Activated B cell treated with CpG ODN at 0.5 μM for 24 hours (primary cell): ENCODE measurements at regions of chr2 and their contacts with region 1.

Region 1: GRCh38 chr2:37083873-37084794 is at the starts of genes GPATCH11 and HEATR5B:
- DNase-seq: peak; percentile 83
- ATAC-seq: peak; percentile 83
- H3K4me3 Mint-ChIP-seq: no peak within 1 kb of the TSS
- H3K27ac Mint-ChIP-seq: no peak within 1 kb of the TSS
- H3K4me1 Mint-ChIP-seq: peaks cover 23% of the 10 kb centered on the region
- H3K27me3 Mint-ChIP-seq: no peaks in the 10 kb centered on the region
- CTCF ChIP-seq: no peak
- total RNA-seq, gene GPATCH11: 30.7 and 32.9 TPM in 2 replicates
- total RNA-seq, gene HEATR5B: 42.6 and 50.3 TPM in 2 replicates

Region 2: GRCh38 chr2:36663851-36664695 is 420.1 kb before region 1 on chr2:
- CTCF ChIA-PET with region 1: no interaction called
- POLR2A ChIA-PET with region 1: no interaction called
- intact Hi-C with region 1: no loop called
- DNase-seq: no peak
- ATAC-seq: no peak
- H3K4me3 Mint-ChIP-seq: no peak overlapping the region
- H3K27ac Mint-ChIP-seq: no peak overlapping the region
- H3K4me1 Mint-ChIP-seq: no peaks in the 10 kb centered on the region
- H3K27me3 Mint-ChIP-seq: peaks cover 3% of the 10 kb centered on the region
- CTCF ChIP-seq: no peak

Region 3: DNA sequence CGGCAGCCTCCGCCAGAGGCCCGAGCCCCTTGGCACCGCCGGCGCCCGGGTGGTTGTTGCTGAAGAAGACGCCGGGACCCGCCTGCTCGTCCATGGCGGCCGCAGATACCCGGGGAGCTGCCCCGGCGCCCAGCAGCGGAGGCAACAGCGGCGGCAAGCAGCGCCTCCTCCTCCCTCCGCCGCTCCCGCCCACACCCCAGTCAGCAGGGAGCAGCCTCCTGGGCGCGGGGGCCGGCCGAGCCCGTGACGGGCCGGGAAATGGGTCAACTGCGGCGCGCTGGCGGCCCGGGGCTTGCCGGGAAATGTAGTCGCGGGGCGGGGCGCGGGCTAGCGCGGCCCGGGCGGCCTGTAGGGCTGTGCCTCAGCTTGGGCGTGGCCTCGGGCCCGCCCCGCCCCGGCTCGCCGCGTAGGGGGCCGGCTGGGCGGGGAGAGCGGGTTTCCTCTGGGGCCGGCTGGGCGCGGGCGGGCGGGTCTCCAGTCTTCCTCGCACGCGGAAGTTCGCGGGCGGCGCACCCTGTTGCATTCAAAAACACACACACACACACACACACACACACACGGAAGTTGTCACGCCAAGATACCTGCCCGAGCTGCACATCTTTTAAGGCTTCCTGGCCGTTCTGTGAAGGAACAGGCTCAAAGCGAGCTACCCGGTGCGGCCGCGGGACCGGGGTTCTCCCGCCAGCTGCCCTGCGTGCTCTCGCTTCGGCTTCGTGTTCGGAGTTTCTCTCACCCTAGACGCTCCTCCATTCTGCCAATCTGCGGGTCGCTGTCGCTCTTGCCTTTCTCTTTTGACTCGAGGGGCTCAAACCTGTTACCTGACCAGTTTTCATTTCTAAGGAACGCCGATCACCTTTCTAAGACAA is 117.5 kb before region 1 on chr2 and contains the start of gene STRN:
- CTCF ChIA-PET with region 1: no interaction called
- POLR2A ChIA-PET with region 1: interaction called, 7 read pairs
- intact Hi-C with region 1: loop called (anchors 1 kb)
- DNase-seq: peak; percentile 100
- ATAC-seq: peak; percentile 91
- H3K4me3 Mint-ChIP-seq: peak within 1 kb of the TSS; percentile 97
- H3K27ac Mint-ChIP-seq: peak within 1 kb of the TSS; percentile 99
- H3K4me1 Mint-ChIP-seq: peaks cover 45% of the 10 kb centered on the region
- H3K27me3 Mint-ChIP-seq: no peaks in the 10 kb centered on the region
- CTCF ChIP-seq: no peak
- total RNA-seq, gene STRN: 24.7 and 24.9 TPM in 2 replicates

Region 4: DNA sequence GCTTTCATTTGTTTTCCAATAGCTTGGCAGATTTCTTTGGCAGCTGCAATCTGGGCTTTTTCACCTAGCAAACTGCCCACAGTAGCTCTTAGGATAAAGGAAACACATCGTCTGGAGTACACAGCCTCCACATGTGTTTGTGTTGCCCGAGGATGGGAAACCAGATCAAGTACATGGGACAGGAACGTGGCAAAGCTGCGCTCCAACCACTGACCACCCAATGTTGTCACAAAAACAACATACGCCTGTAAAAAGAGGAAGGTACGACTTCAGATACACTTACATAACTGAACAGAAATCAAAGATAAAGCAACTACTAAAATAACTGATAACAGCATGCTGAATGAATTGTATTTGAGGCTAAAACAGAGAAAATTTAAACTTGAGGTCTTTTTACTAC is 15.4 kb before region 1 on chr2:
- CTCF ChIA-PET with region 1: no interaction called
- POLR2A ChIA-PET with region 1: no interaction called
- intact Hi-C with region 1: loop called (anchors 2 kb)
- DNase-seq: no peak
- ATAC-seq: no peak
- H3K4me3 Mint-ChIP-seq: no peak overlapping the region
- H3K27ac Mint-ChIP-seq: no peak overlapping the region
- H3K4me1 Mint-ChIP-seq: peaks cover 15% of the 10 kb centered on the region
- H3K27me3 Mint-ChIP-seq: no peaks in the 10 kb centered on the region
- CTCF ChIP-seq: no peak

Region 5: GRCh38 chr2:37110306-37111212 is 26.4 kb after region 1 on chr2:
- CTCF ChIA-PET with region 1: no interaction called
- POLR2A ChIA-PET with region 1: no interaction called
- intact Hi-C with region 1: loop called (anchors 2 kb)
- DNase-seq: no peak
- ATAC-seq: no peak
- H3K4me3 Mint-ChIP-seq: no peak overlapping the region
- H3K27ac Mint-ChIP-seq: no peak overlapping the region
- H3K4me1 Mint-ChIP-seq: no peaks in the 10 kb centered on the region
- H3K27me3 Mint-ChIP-seq: no peaks in the 10 kb centered on the region
- CTCF ChIP-seq: no peak

Region 6: GRCh38 chr2:37196320-37197195 is 112.4 kb after region 1 on chr2 and contains the start of gene CEBPZOS:
- CTCF ChIA-PET with region 1: no interaction called
- POLR2A ChIA-PET with region 1: interaction called, 5 read pairs
- intact Hi-C with region 1: loop called (anchors 1 kb)
- DNase-seq: peak; percentile 87
- ATAC-seq: peak; percentile 90
- H3K4me3 Mint-ChIP-seq: peak within 1 kb of the TSS; percentile 99
- H3K27ac Mint-ChIP-seq: peak within 1 kb of the TSS; percentile 98
- H3K4me1 Mint-ChIP-seq: peaks cover 23% of the 10 kb centered on the region
- H3K27me3 Mint-ChIP-seq: no peaks in the 10 kb centered on the region
- CTCF ChIP-seq: no peak
- total RNA-seq, gene CEBPZOS: 29.2 and 35.5 TPM in 2 replicates